Mammary epithelial cell (primary cell): ENCODE measurements at regions of chr12 and their contacts with region 1.

Region 1: GRCh38 chr12:120190985-120191480 is 3.5 kb downstream of the GCN1 start:
- DNase-seq: no peak
- H3K4me3 ChIP-seq: no peak overlapping the region
- H3K27ac ChIP-seq: no peak overlapping the region
- H3K4me1 ChIP-seq: peaks cover 19% of the 10 kb centered on the region
- H3K27me3 ChIP-seq: no peaks in the 10 kb centered on the region
- CTCF ChIP-seq: no peak

Region 2: GRCh38 chr12:120150919-120151525 is 40.0 kb before region 1 on chr12:
- CTCF ChIA-PET with region 1: no interaction called
- dilution Hi-C with region 1: loop called (anchors 5 kb)
- in situ Hi-C with region 1: no loop called
- intact Hi-C with region 1: no loop called
- DNase-seq: no peak
- H3K4me3 ChIP-seq: no peak overlapping the region
- H3K27ac ChIP-seq: no peak overlapping the region
- H3K4me1 ChIP-seq: no peaks in the 10 kb centered on the region
- H3K27me3 ChIP-seq: no peaks in the 10 kb centered on the region
- CTCF ChIP-seq: no peak

Region 3: DNA sequence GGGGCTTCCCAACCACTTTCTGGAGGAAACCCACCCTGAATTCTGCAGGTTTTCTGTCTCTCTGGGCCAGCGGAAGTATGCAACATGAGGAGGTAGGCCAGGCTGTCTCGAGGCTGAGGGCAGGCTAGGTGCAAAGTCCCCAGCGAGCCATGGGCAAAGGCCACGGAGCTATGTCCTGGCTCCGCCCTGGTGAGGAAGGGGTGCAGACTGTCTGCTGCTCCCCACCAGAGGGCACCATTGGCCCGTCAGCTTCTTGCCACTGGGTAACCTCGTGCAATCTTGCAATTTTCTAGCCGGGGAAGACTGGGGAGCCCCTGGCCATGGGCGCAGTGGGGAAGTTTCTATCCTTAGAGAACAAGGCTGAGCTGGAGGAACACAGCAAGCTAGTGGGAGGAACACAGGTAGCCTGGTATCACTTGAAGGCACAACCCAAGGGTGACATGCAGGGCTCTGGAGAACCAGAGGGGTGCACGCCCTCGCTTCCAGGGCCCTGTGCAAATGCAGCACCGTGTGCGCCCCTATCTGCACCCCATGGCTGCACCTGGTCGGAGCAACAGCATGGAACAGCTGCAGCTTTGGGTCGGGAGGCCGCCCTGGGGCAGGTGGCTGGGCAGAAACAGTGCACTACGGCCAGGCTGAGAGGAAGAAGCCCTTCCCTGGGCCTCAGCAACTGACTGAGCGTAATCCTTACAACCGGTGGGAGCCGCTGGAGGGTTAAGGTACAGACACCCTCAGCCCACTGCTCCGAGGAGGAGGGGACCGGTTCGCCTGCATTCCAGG is 37.4 kb after region 1 on chr12:
- CTCF ChIA-PET with region 1: no interaction called
- dilution Hi-C with region 1: loop called (anchors 5 kb)
- in situ Hi-C with region 1: no loop called
- intact Hi-C with region 1: no loop called
- DNase-seq: peak; percentile 61
- H3K4me3 ChIP-seq: peak overlapping the region in 2 of 3 experiments; percentile 6 to 19
- H3K27ac ChIP-seq: peak overlapping the region; percentile 95
- H3K4me1 ChIP-seq: peaks cover 92% of the 10 kb centered on the region
- H3K27me3 ChIP-seq: no peaks in the 10 kb centered on the region
- CTCF ChIP-seq: peak; percentile 77 to 91

Region 4: GRCh38 chr12:120286796-120287465 is 95.9 kb after region 1 on chr12:
- CTCF ChIA-PET with region 1: no interaction called
- dilution Hi-C with region 1: loop called (anchors 5 kb)
- in situ Hi-C with region 1: no loop called
- intact Hi-C with region 1: no loop called
- DNase-seq: peak; percentile 44
- H3K4me3 ChIP-seq: no peak overlapping the region
- H3K27ac ChIP-seq: no peak overlapping the region
- H3K4me1 ChIP-seq: peaks cover 6% of the 10 kb centered on the region
- H3K27me3 ChIP-seq: no peaks in the 10 kb centered on the region
- CTCF ChIP-seq: no peak